Dorsolateral prefrontal cortex (tissue), 120 donors: ENCODE measurements at regions of chr12 and their contacts with region 1.

Region 1: DNA sequence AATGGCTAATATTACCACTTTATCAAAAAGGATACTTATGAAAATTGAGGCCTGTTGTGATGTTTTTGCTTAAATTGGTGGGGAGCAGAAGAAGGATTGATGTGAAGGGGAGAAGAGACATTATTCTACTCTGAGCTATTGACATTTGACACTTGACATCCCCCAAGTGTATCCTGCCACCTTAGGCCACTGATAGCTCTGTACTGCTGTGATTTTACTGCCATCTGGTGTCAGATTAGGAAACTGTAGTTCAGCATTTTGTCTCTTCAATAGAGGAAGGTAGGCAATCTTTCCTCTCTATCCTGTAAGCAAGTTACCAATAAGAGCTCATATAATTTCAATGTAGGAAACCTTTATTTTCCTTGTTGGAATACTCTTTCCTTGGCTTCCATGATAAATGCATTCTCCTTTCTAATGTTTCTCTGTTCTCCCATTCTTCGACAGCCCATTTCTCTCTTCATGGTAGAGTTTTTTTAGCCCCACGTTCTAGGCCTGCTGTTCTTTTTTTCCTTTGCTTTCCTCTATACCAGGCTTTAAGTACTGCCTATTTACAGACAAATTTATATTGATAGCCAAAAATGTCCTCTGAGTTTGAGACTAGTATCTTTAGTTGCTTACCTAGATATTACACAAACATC is 46.3 kb downstream of the PPHLN1 start:
- DNase-seq: no peak
- H3K4me3 ChIP-seq: no peak overlapping the region
- H3K27ac ChIP-seq: no peak overlapping the region
- H3K27me3 ChIP-seq: no peaks in the 10 kb centered on the region
- CTCF ChIP-seq: peak; percentile 48 to 86 (median 75)

Region 2: DNA sequence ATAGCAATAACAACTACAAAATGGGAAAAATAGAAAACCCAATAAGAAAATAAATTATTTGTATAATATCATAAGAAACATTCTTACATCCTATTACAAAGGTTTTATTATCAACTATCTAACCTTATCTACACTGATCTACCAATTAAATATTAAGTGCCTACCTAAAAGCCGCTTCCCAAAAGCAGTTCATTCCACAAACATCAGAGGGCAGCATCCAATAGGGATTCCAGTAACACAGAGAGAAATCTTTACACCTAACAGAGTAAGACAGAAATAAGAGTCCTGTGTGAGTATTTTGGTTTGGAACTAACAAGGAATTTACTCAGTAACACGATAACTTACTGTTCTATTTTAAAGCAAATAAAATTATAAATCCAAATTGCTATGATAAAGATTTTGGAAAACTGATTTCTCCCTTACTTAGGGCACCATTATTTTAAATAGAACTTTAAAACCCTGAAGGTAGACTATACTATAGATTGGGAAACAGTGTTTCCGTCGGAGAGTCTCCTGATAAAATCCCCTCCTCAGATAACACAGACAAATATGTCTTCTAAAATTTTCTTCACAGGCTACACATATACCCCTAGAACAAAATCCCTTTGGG is 242.6 kb before region 1 on chr12:
- intact Hi-C with region 1: loop called in 1 of 2 experiments (anchors 2 kb)
- DNase-seq: peak in 2 of 10 donors; percentile 42 to 49
- H3K4me3 ChIP-seq: no peak overlapping the region
- H3K27ac ChIP-seq: no peak overlapping the region
- H3K27me3 ChIP-seq: no peaks in the 10 kb centered on the region
- CTCF ChIP-seq: peak; percentile 52 to 95 (median 82)

Region 3: DNA sequence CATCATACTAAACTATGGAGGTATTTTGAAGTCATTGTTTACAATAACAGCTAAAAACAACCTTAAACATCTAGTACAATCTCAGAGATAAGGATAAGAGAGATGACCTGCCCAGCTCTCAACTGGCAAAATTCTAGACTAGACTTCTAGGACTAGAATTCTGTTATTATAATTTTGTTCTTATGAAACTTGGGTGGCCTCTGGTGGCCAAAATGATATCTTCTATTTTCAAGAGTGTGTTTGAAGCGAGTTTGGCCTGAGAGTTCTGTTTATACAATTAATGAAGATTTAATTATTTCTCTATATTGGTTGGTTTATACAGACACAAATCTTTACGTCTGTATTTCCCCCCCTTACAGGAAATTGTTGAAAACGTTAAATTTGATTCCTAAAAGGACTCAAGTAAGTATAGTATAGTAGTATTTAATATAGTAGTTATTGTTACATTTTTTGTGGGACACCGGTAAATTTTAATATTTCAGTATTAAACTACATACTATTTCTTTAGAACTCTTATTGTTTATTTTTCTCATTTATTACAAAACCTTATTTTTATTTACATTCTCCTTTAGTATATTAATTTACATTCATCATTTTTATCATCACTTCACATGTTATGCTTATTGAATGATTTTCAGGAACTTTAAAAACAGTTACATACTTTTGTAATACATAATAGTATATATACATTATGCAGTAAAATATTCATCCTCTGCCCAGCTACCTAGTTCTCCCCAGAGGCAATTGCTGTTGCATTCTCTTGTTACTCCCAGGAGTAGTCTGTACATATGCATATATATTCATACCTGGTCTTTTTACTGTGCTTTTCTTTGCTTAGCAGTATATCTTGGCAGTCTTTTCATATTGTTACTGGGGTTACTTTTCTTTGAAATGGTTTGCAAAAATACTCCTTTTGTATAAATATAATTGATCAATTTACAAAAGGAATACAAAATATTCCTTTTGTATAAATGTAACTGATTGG is 39.7 kb before region 1 on chr12:
- intact Hi-C with region 1: loop called in 1 of 2 experiments (anchors 5 kb)
- DNase-seq: peak in 2 of 10 donors; percentile 20 to 45
- H3K4me3 ChIP-seq: no peak overlapping the region
- H3K27ac ChIP-seq: no peak overlapping the region
- H3K27me3 ChIP-seq: no peaks in the 10 kb centered on the region
- CTCF ChIP-seq: peak; percentile 51 to 87 (median 72)

Region 4: DNA sequence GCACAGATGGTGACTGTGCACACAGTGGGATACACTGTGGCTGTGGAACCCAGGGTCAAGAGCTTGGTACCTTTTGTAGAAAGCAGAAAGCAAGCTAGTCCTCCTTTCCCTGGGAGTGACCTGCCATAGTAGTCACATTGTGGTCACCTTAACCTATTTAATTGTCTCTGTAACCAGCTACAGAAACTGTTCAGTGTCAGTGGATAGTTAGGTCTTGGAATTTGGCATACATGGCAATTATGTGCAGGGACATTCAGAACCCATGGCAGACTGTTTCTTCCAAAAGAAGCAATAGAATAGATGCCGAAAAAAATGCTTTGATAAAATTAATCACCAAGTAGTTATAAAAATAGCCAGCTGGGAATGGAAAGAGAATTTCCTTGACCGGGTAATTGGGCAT is 15.9 kb before region 1 on chr12:
- intact Hi-C with region 1: no loop called
- DNase-seq: no peak
- H3K4me3 ChIP-seq: no peak overlapping the region
- H3K27ac ChIP-seq: no peak overlapping the region
- H3K27me3 ChIP-seq: no peaks in the 10 kb centered on the region
- CTCF ChIP-seq: no peak

Region 5: GRCh38 chr12:42410345-42410744 is 38.1 kb after region 1 on chr12:
- intact Hi-C with region 1: no loop called
- DNase-seq: no peak
- H3K4me3 ChIP-seq: no peak overlapping the region
- H3K27ac ChIP-seq: no peak overlapping the region
- H3K27me3 ChIP-seq: no peaks in the 10 kb centered on the region
- CTCF ChIP-seq: no peak